Activated CD4-positive, alpha-beta T cell treated with anti-CD3 and anti-CD28 coated beads, Interleukin-2, amount 10 ng/mL, durations not matched to agents 24 days and 14 days (primary cell): ENCODE measurements at regions of chr10 and their contacts with region 1.

Region 1: GRCh38 chr10:95183271-95184230 is 10.5 kb upstream of the ACSM6 start:
- DNase-seq: peak; percentile 95
- H3K4me3 Mint-ChIP-seq: peak overlapping the region; percentile 85
- H3K27ac Mint-ChIP-seq: peak overlapping the region; percentile 34
- H3K4me1 Mint-ChIP-seq: peaks cover 9% of the 10 kb centered on the region
- H3K27me3 Mint-ChIP-seq: peaks cover 50% of the 10 kb centered on the region

Region 2: DNA sequence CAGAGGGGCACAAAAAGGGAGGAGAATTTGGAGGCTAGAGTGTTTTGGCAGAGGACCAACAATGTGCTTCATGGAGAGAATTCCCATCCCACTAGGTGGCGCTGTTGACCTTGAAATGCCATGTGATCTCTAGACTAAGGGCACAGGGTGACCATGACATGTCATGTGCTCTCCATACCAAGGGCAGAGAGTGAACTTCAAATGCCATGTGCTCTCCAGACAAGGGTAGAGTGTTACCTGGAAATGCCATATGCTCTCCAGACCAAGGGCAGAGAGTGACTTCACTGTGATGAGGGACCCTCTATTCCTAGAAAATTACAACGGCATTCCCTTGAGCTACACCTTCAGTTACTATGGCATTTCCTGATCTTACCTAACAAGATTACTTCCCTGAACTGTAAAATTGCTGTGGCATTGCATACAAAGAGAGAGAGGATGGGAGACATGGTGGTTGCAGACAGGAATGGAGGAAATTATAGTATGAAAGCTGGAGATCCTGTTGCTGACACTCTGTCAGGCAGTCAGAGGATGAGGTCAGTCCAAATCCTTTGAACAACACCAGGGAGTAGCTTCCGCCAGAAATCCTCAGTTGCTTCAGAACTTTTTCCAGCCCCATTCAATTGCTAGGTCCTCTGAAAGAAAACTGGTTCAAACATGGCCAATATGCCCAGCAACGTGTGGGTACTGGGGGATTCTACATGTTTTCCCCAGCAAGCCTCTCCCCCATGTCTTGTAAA is 50.4 kb before region 1 on chr10:
- intact Hi-C with region 1: loop called (anchors 10 kb)
- DNase-seq: peak; percentile 93
- H3K4me3 Mint-ChIP-seq: no peak overlapping the region
- H3K27ac Mint-ChIP-seq: no peak overlapping the region
- H3K4me1 Mint-ChIP-seq: peaks cover 3% of the 10 kb centered on the region
- H3K27me3 Mint-ChIP-seq: peaks cover 4% of the 10 kb centered on the region